Activated B cell treated with CpG ODN at 0.5 μM for 24 hours (primary cell): ENCODE measurements at regions of chr10 and their contacts with region 1.

Region 1: DNA sequence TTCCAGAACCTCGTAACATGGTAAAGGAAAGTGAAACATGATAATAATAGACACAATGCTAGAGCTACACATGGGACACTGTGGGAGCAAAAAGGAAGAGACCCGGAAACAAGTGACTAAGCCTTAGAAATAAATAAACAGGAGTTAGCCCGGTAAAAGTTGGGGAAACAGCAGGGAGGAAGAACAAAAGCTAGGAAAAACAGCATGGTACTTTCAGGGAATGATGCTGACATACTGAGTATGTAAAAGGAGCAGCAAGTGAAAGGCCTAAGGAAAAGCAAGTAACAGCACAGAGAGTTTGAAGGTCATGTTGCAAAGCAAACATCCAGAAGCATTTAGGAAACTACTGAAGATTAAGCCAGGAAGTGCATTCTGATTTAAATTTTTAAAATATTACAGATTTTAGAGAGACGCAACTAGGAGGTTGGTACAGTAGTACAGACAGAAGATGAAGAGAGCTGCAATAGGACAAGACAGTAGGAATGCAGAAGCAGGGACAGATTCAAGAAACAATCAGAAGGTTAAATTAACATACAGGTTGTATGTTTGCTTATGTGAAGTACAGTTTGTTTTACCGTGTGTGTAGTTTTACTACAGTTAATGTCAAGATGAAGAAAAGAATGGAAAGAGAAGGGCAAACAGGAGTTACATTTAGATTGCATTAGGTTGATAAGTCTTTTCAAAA is 63.7 kb downstream of the ARHGAP12 start:
- DNase-seq: no peak
- ATAC-seq: no peak
- H3K4me3 Mint-ChIP-seq: no peak overlapping the region
- H3K27ac Mint-ChIP-seq: no peak overlapping the region
- H3K4me1 Mint-ChIP-seq: peaks cover 27% of the 10 kb centered on the region
- H3K27me3 Mint-ChIP-seq: no peaks in the 10 kb centered on the region
- CTCF ChIP-seq: no peak

Region 2: DNA sequence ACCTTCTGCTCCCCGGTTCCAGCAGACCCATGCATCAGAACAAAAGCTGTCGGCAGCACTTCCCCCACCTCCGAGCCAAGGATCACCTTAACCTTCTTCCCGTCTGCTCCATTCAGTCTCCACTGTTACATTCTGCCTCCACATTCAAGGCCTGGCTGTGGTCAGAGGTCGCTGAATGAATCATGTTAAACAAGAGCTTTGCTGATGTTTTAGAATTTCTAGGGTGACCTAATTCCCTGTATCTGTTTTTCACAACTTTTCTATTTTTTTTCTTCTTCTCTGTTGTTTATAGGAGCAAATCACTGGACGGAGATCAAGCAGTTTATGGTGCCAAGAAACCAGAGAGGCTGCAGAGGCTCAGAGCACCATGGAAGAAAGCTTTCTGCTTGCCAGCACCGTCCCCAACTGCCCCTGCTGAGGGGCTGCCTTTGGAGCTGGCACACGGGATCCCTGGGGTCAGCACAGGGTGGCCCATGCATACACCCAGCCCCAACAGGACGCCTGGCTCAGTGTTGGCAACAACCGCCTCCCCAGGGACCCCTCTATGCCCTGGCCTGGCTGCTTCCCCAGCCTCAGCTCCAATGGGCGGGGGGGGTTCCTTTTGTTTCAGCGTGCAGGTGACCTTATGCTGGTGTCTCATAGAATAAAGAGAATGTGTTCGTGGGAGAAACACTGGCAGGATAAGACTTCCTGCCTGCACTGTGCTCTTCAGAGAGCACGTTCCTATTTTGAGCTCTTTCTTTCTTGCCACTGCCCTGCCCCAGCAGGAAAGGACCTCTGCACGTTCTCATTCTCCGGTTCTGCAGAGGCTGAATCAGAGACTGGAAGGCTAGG is 1052.7 kb before region 1 on chr10:
- CTCF ChIA-PET with region 1: no interaction called
- POLR2A ChIA-PET with region 1: no interaction called
- intact Hi-C with region 1: no loop called
- DNase-seq: no peak
- ATAC-seq: no peak
- H3K4me3 Mint-ChIP-seq: no peak overlapping the region
- H3K27ac Mint-ChIP-seq: no peak overlapping the region
- H3K4me1 Mint-ChIP-seq: no peaks in the 10 kb centered on the region
- H3K27me3 Mint-ChIP-seq: peaks cover 16% of the 10 kb centered on the region
- CTCF ChIP-seq: no peak

Region 3: DNA sequence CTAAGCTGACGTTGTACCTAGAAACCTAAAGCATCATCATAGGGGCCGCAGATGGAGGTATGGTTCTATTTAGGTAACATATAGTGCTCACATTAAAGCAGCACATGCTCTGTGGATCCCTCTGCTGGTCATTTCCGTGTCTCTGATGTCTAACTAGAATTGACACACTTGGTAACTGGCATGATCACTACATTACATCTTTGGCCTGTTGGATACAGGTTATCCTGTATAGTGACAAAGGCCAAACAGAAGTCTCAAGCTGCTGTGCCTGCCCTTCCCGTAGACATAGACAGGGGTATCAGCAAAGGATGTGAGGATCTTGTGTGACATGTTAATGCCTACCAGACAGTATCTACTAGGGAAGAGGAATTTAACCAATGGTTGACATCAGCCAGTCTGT is 140.1 kb after region 1 on chr10:
- CTCF ChIA-PET with region 1: interaction called, 45 read pairs
- POLR2A ChIA-PET with region 1: interaction called, 3 read pairs
- intact Hi-C with region 1: loop called (anchors 1 kb)
- DNase-seq: no peak
- ATAC-seq: peak; percentile 54
- H3K4me3 Mint-ChIP-seq: no peak overlapping the region
- H3K27ac Mint-ChIP-seq: no peak overlapping the region
- H3K4me1 Mint-ChIP-seq: peaks cover 2% of the 10 kb centered on the region
- H3K27me3 Mint-ChIP-seq: no peaks in the 10 kb centered on the region
- CTCF ChIP-seq: no peak

Region 4: DNA sequence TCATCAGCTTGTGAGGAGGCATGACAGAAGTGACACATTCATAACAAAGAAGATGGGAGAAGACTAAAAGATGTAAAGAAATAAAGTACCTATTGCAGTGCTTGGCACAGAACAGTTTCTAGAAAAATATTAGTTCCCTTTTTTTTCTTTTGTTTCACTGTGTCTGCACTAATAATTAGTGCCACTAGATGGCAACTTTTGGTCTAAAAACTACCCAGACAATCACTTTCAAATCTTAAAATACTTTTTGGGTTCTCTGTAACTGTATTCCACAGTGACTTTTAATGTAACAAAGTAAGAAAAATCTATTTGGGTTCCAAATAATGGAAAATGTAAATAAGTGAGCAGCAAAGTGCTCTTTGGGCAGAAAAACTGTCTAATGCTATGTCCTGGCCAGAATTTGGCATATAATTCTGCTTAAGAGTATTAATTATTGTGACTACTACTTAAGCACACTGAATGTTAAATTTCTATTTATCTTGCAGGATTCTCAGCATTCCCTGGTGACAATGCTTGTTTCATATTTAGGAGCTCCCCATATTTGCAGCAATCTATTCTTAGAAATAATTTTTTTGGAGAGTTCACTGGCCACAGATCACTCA is 326.0 kb after region 1 on chr10:
- CTCF ChIA-PET with region 1: interaction called, 4 read pairs
- POLR2A ChIA-PET with region 1: no interaction called
- intact Hi-C with region 1: loop called (anchors 10 kb)
- DNase-seq: no peak
- ATAC-seq: peak; percentile 75
- H3K4me3 Mint-ChIP-seq: no peak overlapping the region
- H3K27ac Mint-ChIP-seq: peak overlapping the region; percentile 75
- H3K4me1 Mint-ChIP-seq: peaks cover 4% of the 10 kb centered on the region
- H3K27me3 Mint-ChIP-seq: peaks cover 6% of the 10 kb centered on the region
- CTCF ChIP-seq: no peak

Region 5: DNA sequence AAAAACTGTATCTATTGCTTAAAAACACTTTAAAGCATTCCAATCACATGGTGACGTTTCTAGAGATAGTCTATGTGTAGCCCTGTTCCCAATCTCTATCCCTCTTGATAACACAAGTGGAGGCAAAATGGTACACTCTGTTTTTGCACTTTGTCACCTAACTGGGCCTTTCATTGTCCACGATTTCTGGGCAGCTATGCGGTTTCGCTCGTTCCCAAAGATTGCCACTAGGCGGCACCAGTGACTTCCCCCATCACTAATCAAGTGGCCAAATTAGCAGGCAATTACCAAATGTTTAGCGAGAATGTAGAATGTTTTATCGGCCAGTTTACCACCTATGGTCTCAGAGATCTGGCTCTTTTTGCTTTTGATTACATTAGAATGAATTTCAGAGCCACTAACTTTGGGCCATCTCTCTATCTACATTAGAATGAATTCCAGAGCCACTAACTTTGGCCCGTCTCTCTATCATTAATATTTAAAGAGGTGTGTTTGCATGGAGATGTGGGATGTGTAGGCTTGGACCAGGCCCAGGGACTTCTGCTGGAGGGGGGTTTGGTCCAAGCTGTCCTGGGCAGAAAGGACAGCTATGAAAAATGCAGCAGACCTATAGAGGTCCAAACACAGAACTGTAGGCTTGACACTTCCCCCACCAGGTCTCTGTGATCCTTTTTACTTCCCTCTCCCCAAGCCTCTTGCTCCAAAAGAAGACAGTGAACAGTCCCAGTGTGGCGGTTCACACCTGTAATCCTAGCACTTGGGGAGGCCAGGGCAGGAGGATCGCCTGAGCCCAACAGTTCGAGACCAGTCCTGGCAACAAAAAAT is 391.8 kb after region 1 on chr10:
- CTCF ChIA-PET with region 1: no interaction called
- POLR2A ChIA-PET with region 1: no interaction called
- intact Hi-C with region 1: loop called (anchors 5 kb)
- DNase-seq: peak; percentile 52
- ATAC-seq: peak; percentile 88
- H3K4me3 Mint-ChIP-seq: no peak overlapping the region
- H3K27ac Mint-ChIP-seq: no peak overlapping the region
- H3K4me1 Mint-ChIP-seq: peaks cover 6% of the 10 kb centered on the region
- H3K27me3 Mint-ChIP-seq: no peaks in the 10 kb centered on the region
- CTCF ChIP-seq: peak; percentile 20